Activated naive CD4-positive, alpha-beta T cell treated with anti-CD3 and anti-CD28 coated beads for 36 hours (primary cell): ENCODE measurements at regions of chr7 and their contacts with region 1.

Region 1: GRCh38 chr7:155815332-155816191 is 3.3 kb upstream of the SHH start:
- DNase-seq: peak; percentile 87
- H3K4me3 Mint-ChIP-seq: no peak overlapping the region
- H3K27ac Mint-ChIP-seq: no peak overlapping the region
- H3K4me1 Mint-ChIP-seq: peaks cover 17% of the 10 kb centered on the region
- H3K27me3 Mint-ChIP-seq: peaks cover 41% of the 10 kb centered on the region

Region 2: GRCh38 chr7:156147104-156147503 is 331.5 kb after region 1 on chr7:
- CTCF ChIA-PET with region 1: interaction called, 3 read pairs
- intact Hi-C with region 1: loop called (anchors 10 kb)
- DNase-seq: no peak
- H3K4me3 Mint-ChIP-seq: no peak overlapping the region
- H3K27ac Mint-ChIP-seq: no peak overlapping the region
- H3K4me1 Mint-ChIP-seq: no peaks in the 10 kb centered on the region
- H3K27me3 Mint-ChIP-seq: peaks cover 4% of the 10 kb centered on the region

Region 3: DNA sequence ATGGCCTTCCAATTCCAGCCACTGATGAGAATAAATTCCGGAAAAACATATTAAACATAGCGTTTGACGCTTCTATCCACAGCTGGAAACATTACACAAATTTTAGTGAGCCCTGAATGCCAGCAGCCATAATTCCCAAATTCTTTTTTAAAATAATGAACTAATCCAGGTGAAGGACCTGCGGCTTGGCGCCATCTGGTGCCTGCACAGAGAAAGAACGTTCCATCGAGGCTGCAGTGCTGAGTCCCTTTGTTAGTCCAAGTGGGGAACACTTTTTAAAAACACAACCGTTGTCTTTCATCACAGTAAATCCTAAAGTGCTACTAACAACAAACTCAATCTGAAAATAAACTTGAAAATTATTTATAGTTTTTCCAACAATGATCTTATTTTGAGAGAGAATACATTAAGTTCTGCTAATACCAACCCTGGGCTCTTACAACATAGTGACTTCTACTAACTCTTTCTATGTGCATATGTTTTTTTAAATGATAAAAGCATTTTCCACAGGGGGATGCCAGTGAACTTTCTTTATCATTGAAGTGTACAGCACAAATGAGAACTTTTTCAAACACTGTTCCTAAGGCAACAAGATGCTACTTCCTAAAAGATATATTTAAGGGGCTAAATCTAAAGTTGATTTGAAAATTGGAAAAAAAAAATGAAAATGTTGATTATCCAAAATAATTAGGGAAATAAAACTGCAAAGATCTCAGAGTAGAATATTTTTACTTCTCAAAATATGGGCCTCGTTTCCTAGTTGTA is 658.1 kb after region 1 on chr7:
- CTCF ChIA-PET with region 1: interaction called, 3 read pairs
- intact Hi-C with region 1: loop called (anchors 1 kb)
- DNase-seq: peak; percentile 48
- H3K4me3 Mint-ChIP-seq: no peak overlapping the region
- H3K27ac Mint-ChIP-seq: no peak overlapping the region
- H3K4me1 Mint-ChIP-seq: no peaks in the 10 kb centered on the region
- H3K27me3 Mint-ChIP-seq: peaks cover 22% of the 10 kb centered on the region

Region 4: GRCh38 chr7:156816943-156817572 is 1001.5 kb after region 1 on chr7:
- CTCF ChIA-PET with region 1: no interaction called
- intact Hi-C with region 1: loop called (anchors 1 kb)
- DNase-seq: no peak
- H3K4me3 Mint-ChIP-seq: no peak overlapping the region
- H3K27ac Mint-ChIP-seq: no peak overlapping the region
- H3K4me1 Mint-ChIP-seq: no peaks in the 10 kb centered on the region
- H3K27me3 Mint-ChIP-seq: no peaks in the 10 kb centered on the region